Psoas muscle (tissue), 8 donors: ENCODE measurements at regions of chr2 and their contacts with region 1.

Region 1: DNA sequence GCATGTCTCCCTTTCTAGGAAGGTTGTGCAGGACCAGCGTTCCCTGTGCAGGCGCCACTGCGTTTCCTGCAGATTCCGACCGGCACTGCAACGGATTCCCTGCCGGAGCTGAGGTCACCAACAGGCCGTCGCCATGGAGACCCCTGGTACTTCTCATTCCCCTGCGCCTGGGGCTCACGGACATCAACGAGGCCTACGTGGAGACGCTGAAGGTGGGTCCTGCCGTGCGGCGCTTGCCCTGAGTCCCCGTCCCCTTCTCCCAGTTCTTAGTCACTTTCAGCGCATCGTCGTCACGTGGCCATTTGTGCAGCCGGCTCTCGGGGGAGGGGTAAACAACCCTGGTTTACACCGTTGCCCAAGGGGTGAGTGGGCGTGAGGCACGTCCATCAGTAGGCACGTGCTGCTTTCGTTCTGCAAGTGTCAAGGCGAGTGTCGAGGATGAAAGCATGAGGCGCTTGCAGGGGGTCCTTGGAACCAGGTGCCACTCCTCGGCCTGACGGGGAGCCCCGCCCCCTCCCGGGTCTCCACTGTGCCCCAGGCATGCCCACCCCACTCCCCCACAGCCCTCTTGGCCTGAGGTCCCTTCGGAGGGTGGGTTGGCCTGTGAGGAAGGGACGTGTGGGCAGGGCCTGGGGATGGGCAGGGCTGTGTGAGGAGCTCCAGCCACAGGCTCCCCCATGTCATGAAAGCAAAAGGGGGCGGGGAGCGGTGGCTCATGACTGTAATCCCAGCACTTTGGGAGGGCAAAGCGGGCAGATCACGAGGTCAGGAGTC is 19.8 kb downstream of the DTYMK start:
- DNase-seq: no peak
- ATAC-seq: no peak
- H3K4me3 ChIP-seq: no peak overlapping the region
- H3K27ac ChIP-seq: no peak overlapping the region
- H3K4me1 ChIP-seq: no peaks in the 10 kb centered on the region
- H3K27me3 ChIP-seq: no peaks in the 10 kb centered on the region
- CTCF ChIP-seq: no peak

Region 2: DNA sequence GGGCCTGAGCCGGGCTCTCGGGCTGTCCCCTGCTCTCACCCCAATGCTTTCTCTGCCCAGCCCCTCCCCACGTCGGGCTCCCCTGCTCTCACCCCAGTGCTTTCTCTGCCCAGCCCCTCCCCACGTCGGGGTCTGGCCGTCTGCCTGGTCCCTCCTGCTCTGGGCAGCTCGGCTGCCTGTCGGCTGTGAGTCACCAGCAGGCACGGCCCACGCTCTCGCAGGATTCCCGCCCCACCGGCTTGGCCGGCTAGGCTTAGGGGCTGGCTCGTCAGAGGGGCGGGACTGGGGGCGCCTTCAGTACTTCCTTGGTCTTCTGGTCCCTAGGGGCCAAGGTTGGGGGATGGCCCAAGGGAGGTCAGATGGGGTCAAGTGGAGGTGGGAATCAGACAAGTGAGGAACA is 105.0 kb before region 1 on chr2:
- intact Hi-C with region 1: no loop called
- DNase-seq: peak; percentile 61 to 63
- ATAC-seq: peak; percentile 42 to 52 (median 43)
- H3K4me3 ChIP-seq: no peak overlapping the region
- H3K27ac ChIP-seq: no peak overlapping the region
- H3K4me1 ChIP-seq: peaks cover 11% of the 10 kb centered on the region
- H3K27me3 ChIP-seq: peaks cover 0 to 39% (median 13%) of the 10 kb centered on the region in 3 donors
- CTCF ChIP-seq: no peak

Region 3: DNA sequence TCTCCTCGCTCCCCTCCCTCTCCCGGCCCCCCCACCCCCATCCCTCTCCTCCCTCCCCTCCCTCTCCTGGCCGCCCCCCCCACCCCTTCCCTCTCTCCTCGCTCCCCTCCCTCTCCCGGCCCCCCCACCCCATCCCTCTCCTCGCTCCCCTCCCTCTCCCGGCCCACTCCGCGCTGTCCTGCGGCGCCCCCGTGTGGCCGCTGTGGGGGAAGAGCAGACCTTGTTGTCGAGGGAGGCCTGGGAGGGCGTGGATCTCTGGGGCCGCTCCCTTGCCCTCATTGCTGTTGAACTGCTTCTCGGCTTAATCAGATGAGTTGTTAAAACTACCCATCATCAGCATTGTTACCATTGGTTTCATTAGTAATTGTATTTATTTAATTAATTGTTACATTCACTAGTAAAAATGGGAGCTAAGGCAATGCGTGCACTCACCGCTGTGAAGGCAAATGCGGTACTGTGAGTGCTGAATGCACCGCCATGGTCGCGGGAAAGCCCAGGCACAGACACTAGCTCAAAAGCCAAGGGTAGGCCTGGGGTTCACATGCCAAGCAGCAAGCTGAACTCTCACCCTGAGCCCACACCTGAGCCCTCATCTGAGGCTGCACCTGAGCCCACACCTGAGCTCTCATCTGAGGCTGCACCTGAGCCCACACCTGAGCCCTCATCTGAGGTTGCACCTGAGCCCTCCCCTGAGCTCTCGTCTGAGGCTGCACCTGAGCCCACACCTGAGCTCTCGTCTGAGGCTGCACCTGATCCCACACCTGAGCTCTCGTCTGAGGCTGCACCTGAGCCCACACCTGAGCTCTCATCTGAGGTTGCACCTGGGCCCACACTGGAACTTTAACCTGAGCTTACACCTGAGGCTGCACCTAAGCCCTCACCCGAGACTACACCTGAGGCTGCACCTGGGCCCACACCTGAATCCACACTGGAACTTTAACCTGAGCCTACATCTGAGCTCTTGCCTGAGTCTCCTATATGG is 211.5 kb after region 1 on chr2:
- intact Hi-C with region 1: loop called in 1 of 2 experiments (anchors 5 kb)
- DNase-seq: peak; percentile 79 to 85
- ATAC-seq: peak in 3 of 4 donors; percentile 45 to 50 (median 48)
- H3K4me3 ChIP-seq: no peak overlapping the region
- H3K27ac ChIP-seq: no peak overlapping the region
- H3K4me1 ChIP-seq: peaks cover 10% of the 10 kb centered on the region
- H3K27me3 ChIP-seq: peaks cover 0 to 2% (median 0%) of the 10 kb centered on the region in 3 donors
- CTCF ChIP-seq: peak; percentile 59